ENCODE measurements at regions of chr7 and their contacts with region 1.

Region 1: DNA sequence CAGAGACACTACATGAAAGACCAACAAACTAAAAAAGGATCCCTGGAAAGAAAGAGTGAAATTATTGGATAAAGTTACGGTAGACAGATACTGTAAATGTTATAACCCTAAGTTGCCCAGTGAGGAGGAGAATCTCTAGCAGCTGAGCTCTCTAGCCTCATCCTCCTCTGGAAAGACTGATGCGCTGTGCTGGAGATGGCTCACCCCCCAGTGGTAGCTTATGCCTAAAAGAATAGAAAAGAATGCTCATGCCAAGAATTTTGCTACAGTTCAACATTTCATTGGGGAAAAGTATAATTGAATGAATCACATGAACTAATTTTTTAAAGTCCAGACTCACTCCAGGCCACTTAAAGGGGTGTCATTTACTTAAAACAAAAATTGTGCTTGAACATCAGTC is 50.8 kb upstream of the RNF32 start:
- DNase-seq: no peak
- H3K4me3 ChIP-seq: no peak overlapping the region
- H3K27ac ChIP-seq: no peak overlapping the region
- H3K4me1 ChIP-seq: no peaks in the 10 kb centered on the region
- H3K27me3 ChIP-seq: no peaks in the 10 kb centered on the region
- CTCF ChIP-seq: no peak
- POLR2A ChIP-seq: no peak

Region 2: GRCh38 chr7:156602283-156602682 is 12.5 kb after region 1 on chr7:
- CTCF ChIA-PET with region 1: interaction called, 13 read pairs
- POLR2A ChIA-PET with region 1: no interaction called
- dilution Hi-C with region 1: no loop called
- intact Hi-C with region 1: loop called (anchors 1 kb)
- DNase-seq: no peak
- H3K4me3 ChIP-seq: no peak overlapping the region
- H3K27ac ChIP-seq: no peak overlapping the region
- H3K4me1 ChIP-seq: peaks cover under 1% of the 10 kb centered on the region
- H3K27me3 ChIP-seq: no peaks in the 10 kb centered on the region
- CTCF ChIP-seq: no peak
- POLR2A ChIP-seq: no peak

Region 3: DNA sequence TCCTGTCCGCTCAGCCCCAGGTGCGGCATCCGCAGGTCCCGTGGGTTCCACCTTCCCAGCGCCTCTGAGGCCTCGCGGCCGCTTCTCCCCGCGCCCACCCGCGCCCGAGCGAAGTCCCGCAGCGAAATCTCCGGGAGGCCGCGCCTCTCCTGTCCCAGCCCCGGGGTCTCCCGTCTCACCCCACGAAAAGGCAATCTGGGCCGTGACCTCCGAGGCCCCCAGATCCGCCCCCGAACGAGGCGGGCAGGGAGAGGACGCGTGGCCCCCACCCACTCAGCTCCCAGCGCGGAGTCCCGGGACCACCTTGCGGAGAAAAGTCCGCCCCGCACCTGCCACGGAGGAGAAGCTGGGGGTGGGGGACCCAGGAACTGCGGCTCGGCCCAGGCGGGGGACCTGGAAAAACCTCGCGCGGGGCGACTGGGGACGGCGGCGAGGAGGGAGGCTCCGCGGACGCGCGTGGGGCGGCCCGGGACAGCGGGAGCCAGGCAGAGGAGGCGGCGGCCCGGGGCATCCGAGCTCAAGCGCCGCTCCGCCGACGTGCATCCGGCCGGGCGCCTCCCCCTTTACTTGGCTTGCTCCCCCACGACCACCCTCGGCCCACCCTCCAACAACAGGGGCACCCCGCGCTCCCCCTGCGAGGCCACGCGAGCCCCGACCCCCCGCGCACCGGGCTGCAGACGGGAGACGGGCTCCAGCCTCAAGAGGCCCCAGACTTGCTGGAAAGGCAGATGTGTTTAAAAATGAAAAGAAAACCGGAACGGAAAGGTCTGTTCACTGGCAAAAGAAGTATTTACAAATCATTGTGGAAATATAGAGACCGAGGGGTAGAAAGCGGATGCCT is 17.7 kb after region 1 on chr7:
- CTCF ChIA-PET with region 1: interaction called, 13 read pairs
- POLR2A ChIA-PET with region 1: no interaction called
- dilution Hi-C with region 1: no loop called
- intact Hi-C with region 1: loop called (anchors 1 kb)
- DNase-seq: no peak
- H3K4me3 ChIP-seq: peak overlapping the region; percentile 42 to 57 (median 44)
- H3K27ac ChIP-seq: no peak overlapping the region
- H3K4me1 ChIP-seq: peaks cover 14% of the 10 kb centered on the region
- H3K27me3 ChIP-seq: no peaks in the 10 kb centered on the region
- CTCF ChIP-seq: no peak
- POLR2A ChIP-seq: no peak